MCF 10A (cell line): ENCODE measurements at regions of chr10 and their contacts with region 1.

Region 1: GRCh38 chr10:76106611-76107010 is 675.2 kb downstream of the LRMDA start:
- DNase-seq: no peak
- H3K4me3 Mint-ChIP-seq: no peak overlapping the region
- H3K27ac Mint-ChIP-seq: no peak overlapping the region
- H3K4me1 Mint-ChIP-seq: peaks cover 17% of the 10 kb centered on the region
- H3K27me3 Mint-ChIP-seq: no peaks in the 10 kb centered on the region
- CTCF ChIP-seq: no peak

Region 2: DNA sequence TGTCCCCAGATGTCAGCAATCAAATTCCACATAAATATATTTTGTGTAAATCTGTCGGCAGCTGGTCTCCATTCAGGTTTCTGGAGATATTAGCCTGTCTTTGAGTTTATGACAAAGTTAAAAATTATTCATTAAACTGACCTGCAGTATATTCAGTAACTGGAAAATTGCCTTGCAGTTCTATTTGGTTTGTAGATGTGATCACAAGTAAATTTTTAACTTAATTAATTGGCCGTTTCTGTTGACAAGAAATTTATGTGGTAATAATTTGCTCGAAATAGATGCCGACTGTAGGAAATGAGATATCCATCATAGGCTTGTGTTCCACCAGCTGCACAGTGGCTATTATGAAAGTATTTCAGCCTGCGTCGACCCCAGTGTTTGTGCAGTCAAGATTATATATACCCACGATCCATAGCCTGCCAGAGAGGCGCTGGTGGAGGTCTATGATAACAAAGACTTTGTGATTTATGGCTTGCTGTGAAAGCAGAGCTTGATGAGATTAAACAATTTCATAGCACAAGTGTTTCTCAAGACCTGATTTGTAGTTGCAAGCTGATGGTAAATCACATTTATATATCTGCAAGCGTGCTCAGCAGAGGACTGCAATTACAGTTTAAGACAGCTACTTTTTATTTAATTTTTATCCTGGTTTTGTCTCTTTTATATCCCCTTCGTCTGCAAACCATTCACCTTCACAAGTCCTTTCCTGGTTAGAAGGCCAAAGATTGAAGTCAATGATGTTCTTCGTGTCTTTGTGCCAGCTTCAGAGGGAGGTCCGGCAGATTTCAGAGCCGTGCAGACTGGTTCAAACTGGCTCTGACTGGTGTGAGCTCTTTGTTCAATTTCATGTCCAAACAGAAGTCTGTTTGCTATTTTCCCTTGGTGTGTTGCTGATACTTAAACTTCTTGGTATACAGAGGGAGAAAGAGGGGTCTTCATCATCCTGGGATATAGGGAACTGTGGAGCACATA is 175.7 kb after region 1 on chr10:
- CTCF ChIA-PET with region 1: no interaction called
- POLR2A ChIA-PET with region 1: no interaction called
- intact Hi-C with region 1: no loop called
- DNase-seq: no peak
- H3K4me3 Mint-ChIP-seq: no peak overlapping the region
- H3K27ac Mint-ChIP-seq: no peak overlapping the region
- H3K4me1 Mint-ChIP-seq: no peaks in the 10 kb centered on the region
- H3K27me3 Mint-ChIP-seq: no peaks in the 10 kb centered on the region
- CTCF ChIP-seq: no peak

Region 3: GRCh38 chr10:76303682-76304316 is 197.2 kb after region 1 on chr10:
- CTCF ChIA-PET with region 1: no interaction called
- POLR2A ChIA-PET with region 1: no interaction called
- intact Hi-C with region 1: loop called (anchors 1 kb)
- DNase-seq: peak; percentile 73
- H3K4me3 Mint-ChIP-seq: no peak overlapping the region
- H3K27ac Mint-ChIP-seq: no peak overlapping the region
- H3K4me1 Mint-ChIP-seq: no peaks in the 10 kb centered on the region
- H3K27me3 Mint-ChIP-seq: no peaks in the 10 kb centered on the region
- CTCF ChIP-seq: peak; percentile 46

Region 4: DNA sequence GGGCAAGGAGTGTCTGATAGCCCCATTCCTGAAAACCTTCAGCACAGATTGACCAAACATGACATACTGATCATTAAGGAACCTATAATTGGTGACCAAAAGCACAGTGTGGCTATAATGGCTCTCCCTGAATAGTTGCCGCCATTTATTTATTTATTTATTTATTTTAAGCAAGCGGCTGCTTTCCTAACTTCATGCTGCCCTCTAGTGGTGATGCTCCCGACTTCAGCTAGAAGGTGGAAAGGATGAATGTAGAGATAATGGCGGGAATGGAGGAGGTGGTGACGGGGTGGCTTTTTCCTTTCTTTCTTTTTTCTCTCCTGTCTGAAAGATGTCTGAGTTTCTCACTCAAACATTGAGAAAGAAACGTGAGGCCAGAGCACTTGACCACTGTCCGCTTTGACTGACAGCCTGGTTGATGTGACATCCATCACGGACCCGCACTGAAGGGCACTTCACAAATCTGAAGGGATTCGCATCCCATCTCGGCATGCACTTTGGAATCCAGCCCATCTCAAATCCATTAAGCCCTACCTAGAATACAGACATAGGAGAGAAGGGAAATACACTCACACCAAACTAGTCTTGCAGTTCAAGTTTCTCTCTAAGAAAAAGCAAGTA is 440.9 kb after region 1 on chr10:
- CTCF ChIA-PET with region 1: no interaction called
- POLR2A ChIA-PET with region 1: no interaction called
- intact Hi-C with region 1: loop called (anchors 1 kb)
- DNase-seq: peak; percentile 84
- H3K4me3 Mint-ChIP-seq: no peak overlapping the region
- H3K27ac Mint-ChIP-seq: no peak overlapping the region
- H3K4me1 Mint-ChIP-seq: no peaks in the 10 kb centered on the region
- H3K27me3 Mint-ChIP-seq: no peaks in the 10 kb centered on the region
- CTCF ChIP-seq: peak; percentile 74